ENCODE measurements at regions of chrX and their contacts with region 1.

Region 1: GRCh38 chrX:25020905-25021449 is 5.2 kb upstream of the ARX start:
- DNase-seq: no peak
- H3K4me3 ChIP-seq: peak overlapping the region in 1 of 3 donors; percentile 2
- H3K27ac ChIP-seq: no peak overlapping the region
- H3K4me1 ChIP-seq: peaks cover 4 to 16% of the 10 kb centered on the region in 2 donors
- H3K27me3 ChIP-seq: peaks cover 42% of the 10 kb centered on the region
- CTCF ChIP-seq: peak in 5 of 6 experiments; percentile 14 to 52 (median 30)
- POLR2A ChIP-seq: no peak

Region 2: DNA sequence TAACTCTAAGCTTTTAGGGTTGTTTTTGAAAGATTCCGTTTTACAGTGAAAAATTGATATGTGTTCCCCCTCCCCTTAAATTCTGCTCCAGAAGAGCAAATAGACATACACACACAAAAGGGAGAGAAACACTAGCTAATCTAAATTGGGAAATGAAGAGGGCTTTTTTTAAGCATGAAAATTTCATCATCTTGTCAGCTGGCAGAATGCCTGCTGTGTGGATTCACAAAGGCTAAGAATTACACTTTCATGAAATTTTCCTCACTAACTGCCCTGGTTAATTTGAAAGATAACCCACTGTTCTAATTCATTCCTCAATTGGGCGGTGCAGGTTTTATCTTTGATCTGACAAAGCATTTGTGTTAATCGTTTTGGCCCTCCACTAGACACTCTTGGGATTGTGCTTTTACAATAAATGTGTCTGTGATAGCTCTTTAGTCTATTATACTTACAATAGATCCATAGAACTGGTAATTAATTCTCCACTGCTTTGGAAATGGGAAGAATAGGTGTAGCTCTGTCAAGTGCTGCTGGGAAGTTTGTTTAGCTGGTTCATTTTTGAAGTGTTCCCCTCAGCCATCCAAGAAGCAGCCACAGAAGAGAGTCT is 174.3 kb before region 1 on chrX:
- intact Hi-C with region 1: loop called (anchors 10 kb)
- DNase-seq: peak in 1 of 2 donors; percentile 5
- H3K4me3 ChIP-seq: no peak overlapping the region
- H3K27ac ChIP-seq: no peak overlapping the region
- H3K4me1 ChIP-seq: peaks cover 6 to 29% of the 10 kb centered on the region in 2 donors
- H3K27me3 ChIP-seq: no peaks in the 10 kb centered on the region
- CTCF ChIP-seq: no peak
- POLR2A ChIP-seq: no peak